ENCODE measurements at regions of chr14 and their contacts with region 1.

Region 1: DNA sequence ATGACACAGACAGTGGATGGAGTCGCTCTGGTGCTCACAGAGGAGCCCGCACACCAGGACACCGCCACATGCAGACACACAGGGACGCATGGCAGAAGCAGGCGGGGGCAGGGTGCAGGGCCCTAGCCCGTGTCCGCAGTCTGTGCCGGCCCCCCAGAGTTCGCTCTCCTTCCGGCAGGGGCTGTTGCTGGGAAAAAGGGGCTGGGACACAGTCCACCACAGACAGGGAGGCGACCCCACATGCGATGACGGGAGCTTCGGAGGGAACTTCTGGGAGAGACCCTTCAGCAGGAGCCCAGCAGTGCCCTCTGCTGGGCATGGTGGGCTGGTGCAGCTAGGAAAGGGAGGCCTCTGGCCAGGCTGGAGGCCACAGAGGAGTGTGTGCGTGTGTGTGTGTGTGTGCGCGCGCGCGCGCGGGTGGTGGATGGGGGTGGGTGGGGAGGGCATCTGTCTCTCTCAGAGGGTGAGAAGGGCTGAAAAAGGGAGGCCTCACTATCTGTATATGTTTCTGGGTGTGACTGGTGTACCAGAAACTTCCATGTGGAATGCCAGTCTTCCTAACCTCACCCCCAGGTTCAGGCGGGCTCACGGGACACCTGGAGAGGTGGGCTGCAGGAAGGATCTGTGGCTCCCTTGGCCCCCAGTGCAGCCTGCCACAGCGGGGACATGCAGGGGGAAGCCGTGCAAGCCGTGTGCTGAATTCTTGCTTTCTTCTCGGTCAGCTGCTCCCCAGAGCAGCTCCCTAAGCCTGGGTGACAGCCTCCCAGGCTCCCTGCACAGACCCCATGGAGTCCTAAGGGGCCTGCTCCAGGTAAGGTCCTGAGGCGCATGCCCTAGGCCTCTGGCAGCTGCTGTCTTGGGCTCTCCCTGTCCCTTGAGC is 60.7 kb downstream of the PLEKHG3 start:
- DNase-seq: peak; percentile 76 to 83
- ATAC-seq: peak; percentile 21 to 70; a peak in 4 of 6 replicates
- H3K4me3 ChIP-seq: 0 out of 3 replicates have a peak overlapping the region, but pooled peaks have one; percentile 24
- H3K27ac ChIP-seq: peak overlapping the region; percentile 92 to 93
- H3K4me1 ChIP-seq: peaks cover 64% of the 10 kb centered on the region
- CTCF ChIP-seq: peak; percentile 88
- EP300 ChIP-seq: no peak
- POLR2A ChIP-seq: no peak
- RAD21 ChIP-seq: peak; percentile 88 to 92

Region 2: GRCh38 chr14:64671591-64671990 is 93.3 kb before region 1 on chr14:
- CTCF ChIA-PET with region 1: interaction called, 147 read pairs
- POLR2A ChIA-PET with region 1: interaction called, 4 read pairs
- DNase-seq: peak; percentile 72 to 80
- ATAC-seq: peak; percentile 74 to 87; a peak in 5 of 6 replicates
- H3K4me3 ChIP-seq: no peak overlapping the region
- H3K27ac ChIP-seq: peak overlapping the region; percentile 75 to 79
- H3K4me1 ChIP-seq: peaks cover 37% of the 10 kb centered on the region
- CTCF ChIP-seq: peak; percentile 87
- EP300 ChIP-seq: no peak
- POLR2A ChIP-seq: no peak
- RAD21 ChIP-seq: peak; percentile 94

Region 3: DNA sequence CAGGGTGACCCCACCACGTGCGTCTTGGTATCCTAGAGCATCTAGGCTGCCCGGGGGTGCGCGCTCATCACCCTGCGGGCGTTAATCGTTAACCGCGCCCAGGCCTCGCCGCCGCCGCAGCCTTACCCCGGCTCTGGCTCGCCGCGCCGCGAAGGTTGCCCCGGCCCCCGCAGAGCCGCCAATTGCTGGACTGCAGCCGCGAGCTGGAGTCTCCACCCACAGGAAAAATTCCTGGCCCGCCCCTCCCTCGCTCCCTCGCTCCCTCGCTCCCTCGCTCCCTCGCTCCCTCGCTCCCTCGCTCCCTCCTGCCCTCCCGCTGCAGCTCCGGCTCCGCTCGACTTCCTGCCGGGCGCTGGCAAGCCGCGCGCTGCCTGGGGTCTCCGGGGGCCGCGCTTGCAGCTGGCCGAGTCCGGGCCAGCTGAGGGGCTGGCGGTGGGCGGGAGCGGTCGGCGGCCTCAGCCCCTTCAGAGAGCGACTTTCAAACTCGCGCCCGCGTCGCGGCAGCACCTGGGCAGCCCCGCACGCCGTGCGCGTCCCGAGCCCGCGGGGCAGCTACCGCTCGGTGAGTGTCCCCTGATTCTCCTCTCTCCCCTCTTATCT is 60.6 kb before region 1 on chr14 and contains the start of gene PLEKHG3:
- CTCF ChIA-PET with region 1: interaction called, 29 read pairs
- POLR2A ChIA-PET with region 1: interaction called, 16 read pairs
- DNase-seq: peak; percentile 79 to 84
- ATAC-seq: peak; percentile 72 to 83
- H3K4me3 ChIP-seq: peak within 1 kb of the TSS; percentile 72
- H3K27ac ChIP-seq: peak within 1 kb of the TSS; percentile 90 to 95
- H3K4me1 ChIP-seq: peaks cover 58% of the 10 kb centered on the region
- CTCF ChIP-seq: no peak
- EP300 ChIP-seq: no peak
- POLR2A ChIP-seq: no peak; the same call in 1 of the 2 replicates
- RAD21 ChIP-seq: 0 out of 5 replicates have a peak, but pooled peaks of 1 of the 2 experiments have one; percentile 22
- polyA plus RNA-seq, gene PLEKHG3: 29.8 and 30.5 TPM in 2 replicates

Region 4: DNA sequence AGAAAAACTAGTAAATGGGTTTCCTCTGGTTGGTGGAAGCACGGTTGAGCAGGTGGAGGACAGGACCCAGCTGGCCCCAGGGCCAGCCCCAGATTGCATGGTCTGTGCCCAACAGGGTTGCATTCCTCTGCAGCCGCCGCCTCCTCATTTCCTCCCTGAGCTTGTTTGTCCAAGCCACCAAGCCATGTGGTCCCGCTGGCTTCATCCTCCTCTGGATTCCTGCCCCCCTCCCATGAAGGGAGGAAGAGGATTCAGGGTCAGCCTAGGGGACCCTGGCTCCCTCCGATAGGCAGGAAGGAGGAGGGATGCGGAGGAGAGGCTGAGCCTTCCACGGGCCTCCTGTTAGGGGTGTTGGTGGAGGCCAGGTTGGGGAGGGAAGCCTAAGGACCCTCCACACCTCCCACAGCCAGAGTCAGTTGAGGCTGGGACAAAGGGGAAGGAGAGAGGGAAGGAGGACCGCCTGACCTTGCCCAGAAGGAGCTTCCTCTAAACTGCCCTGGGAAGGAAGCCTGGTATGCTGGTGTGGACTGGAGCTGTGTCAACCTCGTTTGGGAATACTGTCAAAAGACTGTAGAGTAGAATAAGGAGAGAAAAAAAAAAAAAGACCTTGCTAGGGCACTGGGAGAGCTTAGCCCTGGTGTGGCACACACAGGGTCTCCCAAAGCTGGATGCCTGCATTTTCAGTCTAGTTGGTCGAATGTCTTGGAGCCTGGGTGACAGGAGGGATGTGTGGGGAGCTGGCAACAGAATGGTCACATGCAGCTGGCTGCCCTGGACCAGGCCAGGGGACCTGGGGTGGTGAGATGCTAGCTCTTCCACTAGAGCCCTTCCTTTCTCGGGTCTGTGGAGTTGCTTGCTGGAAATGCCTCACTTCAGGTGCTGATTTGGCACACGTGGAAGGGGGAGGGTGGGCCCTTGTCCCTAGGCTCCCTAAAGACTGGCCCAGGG is 18.3 kb before region 1 on chr14:
- CTCF ChIA-PET with region 1: interaction called, 15 read pairs
- POLR2A ChIA-PET with region 1: no interaction called
- DNase-seq: no peak
- ATAC-seq: no peak
- H3K4me3 ChIP-seq: no peak overlapping the region
- H3K27ac ChIP-seq: peak overlapping the region in 1 of 2 experiments; percentile 27; a peak in 1 of 6 replicates
- H3K4me1 ChIP-seq: peaks cover 9% of the 10 kb centered on the region; the same call in 1 of the 3 replicates
- CTCF ChIP-seq: no peak
- EP300 ChIP-seq: no peak
- POLR2A ChIP-seq: no peak
- RAD21 ChIP-seq: no peak

Region 5: DNA sequence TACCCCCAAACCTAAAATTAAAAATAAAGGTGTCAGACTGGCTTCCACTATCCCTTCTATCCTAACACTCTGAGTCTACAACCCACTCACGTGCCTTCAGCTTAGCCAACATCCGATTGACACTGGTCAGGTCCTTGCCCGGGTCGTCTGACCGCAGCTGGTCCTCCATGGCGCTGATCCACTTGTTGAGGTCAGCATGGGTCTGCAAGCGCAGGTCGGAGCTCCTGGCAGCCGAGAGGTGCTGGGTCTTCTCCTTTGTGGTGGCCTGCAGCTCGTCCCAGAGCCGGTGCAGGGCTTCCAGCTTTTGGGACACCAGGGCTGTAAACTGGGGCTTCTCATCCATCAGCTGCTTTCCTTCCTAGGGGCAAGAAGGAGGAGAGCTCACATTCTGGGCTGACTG is 17.3 kb after region 1 on chr14:
- CTCF ChIA-PET with region 1: interaction called, 15 read pairs
- POLR2A ChIA-PET with region 1: no interaction called
- DNase-seq: no peak
- ATAC-seq: no peak
- H3K4me3 ChIP-seq: no peak overlapping the region
- H3K27ac ChIP-seq: no peak overlapping the region
- H3K4me1 ChIP-seq: no peaks in the 10 kb centered on the region
- CTCF ChIP-seq: no peak
- EP300 ChIP-seq: no peak
- POLR2A ChIP-seq: no peak
- RAD21 ChIP-seq: no peak

Region 6: GRCh38 chr14:64806202-64806860 is 41.5 kb after region 1 on chr14:
- CTCF ChIA-PET with region 1: interaction called, 25 read pairs
- POLR2A ChIA-PET with region 1: interaction called, 3 read pairs
- DNase-seq: peak; percentile 87 to 91
- ATAC-seq: peak; percentile 88 to 91
- H3K4me3 ChIP-seq: 0 out of 3 replicates have a peak overlapping the region, but pooled peaks have one; percentile 11
- H3K27ac ChIP-seq: peak overlapping the region; percentile 91 to 93
- H3K4me1 ChIP-seq: peaks cover 35% of the 10 kb centered on the region
- CTCF ChIP-seq: no peak
- EP300 ChIP-seq: peak; percentile 74 to 78; a peak in 2 of 5 replicates
- POLR2A ChIP-seq: no peak
- RAD21 ChIP-seq: no peak; a peak in 1 of 5 replicates